Body of pancreas (tissue), 4 donors: ENCODE measurements at regions of chr14 and their contacts with region 1.

Region 1: DNA sequence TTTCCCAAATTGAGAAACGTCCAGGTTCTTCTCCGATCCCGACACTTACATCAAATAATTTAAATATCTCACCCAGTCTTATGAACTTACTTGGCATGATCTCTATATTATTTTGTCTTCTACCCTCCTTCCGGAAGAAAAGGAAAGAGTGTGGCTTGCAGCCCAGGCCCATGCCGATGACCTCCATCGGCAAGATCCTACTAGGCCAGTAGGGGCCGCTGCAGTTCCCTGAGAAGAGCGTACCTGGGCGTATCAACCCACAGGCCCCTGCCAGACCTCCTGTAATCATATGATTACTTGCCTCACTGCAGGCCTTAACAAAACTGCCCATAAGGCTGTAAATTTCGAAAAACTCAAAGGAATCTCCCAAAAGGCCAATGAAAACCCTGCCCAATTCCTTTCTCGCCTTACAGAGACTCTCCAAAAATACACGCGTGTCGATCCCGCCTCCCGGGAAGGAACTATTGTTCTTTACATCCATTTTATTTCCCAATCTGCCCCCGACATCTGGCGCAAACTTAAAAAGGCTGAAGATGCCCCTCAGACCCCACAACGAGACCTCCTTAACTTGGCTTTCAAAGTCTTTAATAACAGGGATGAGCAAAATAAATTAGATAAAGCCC is 69.6 kb downstream of the MOK start:
- DNase-seq: peak; percentile 91 to 95 (median 92)
- ATAC-seq: peak; percentile 100
- H3K4me3 ChIP-seq: no peak overlapping the region
- H3K27ac ChIP-seq: peak overlapping the region in 1 of 4 donors; percentile 19
- H3K4me1 ChIP-seq: peaks cover 11% of the 10 kb centered on the region
- H3K27me3 ChIP-seq: no peaks in the 10 kb centered on the region
- CTCF ChIP-seq: peak; percentile 62 to 96 (median 85)
- POLR2A ChIP-seq: no peak

Region 2: DNA sequence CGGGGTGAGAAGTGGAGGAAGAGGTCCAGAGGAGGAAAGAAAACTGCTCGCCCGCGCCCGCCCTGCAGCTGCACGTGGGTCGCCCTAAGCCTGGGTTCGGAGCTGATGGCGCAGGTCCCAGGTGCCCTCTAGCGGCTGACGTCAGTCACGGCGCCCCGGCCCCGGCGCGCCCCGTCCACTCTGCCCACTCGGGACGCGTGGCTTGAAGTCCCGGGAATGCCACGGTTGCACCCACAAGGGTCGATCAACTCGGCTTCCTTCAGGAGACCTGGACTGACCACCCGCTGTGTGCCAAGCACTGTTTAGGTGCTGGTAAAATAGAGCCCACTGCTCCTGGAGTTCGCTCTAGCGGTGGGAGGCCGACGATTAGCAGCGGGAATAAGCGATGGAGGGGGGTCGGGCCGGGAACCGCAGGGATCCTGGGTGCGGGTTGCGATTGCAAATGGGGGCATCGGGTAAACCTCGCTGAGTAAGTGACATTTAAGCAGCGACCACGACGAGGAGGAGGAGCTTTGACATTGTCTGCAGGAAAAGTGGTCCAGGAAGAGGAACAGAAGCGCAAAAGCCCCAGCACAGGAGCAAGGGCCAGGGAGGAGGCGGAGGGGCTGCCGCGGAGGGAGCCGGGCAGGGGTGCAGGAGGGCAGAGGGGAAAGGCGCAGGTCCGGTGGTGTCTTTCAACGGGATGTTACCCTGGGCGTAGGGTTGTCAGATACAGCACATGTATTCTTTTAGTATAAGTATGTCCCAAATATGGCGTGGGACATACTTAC is 79.0 kb after region 1 on chr14:
- intact Hi-C with region 1: loop called (anchors 5 kb)
- DNase-seq: peak; percentile 86 to 90 (median 88)
- ATAC-seq: peak; percentile 75
- H3K4me3 ChIP-seq: no peak overlapping the region
- H3K27ac ChIP-seq: peak overlapping the region in 3 of 4 donors; percentile 11 to 37 (median 25)
- H3K4me1 ChIP-seq: peaks cover 37% of the 10 kb centered on the region
- H3K27me3 ChIP-seq: no peaks in the 10 kb centered on the region
- CTCF ChIP-seq: peak; percentile 87 to 98 (median 95)
- POLR2A ChIP-seq: no peak